Activated CD4-positive, alpha-beta T cell treated with anti-CD3 and anti-CD28 coated beads for 36 hours (primary cell): ENCODE measurements at regions of chr16 and their contacts with region 1.

Region 1: GRCh38 chr16:87540945-87541877 is 48.4 kb upstream of the ZCCHC14 start:
- DNase-seq: no peak
- ATAC-seq: no peak
- H3K4me3 Mint-ChIP-seq: no peak overlapping the region
- H3K27ac Mint-ChIP-seq: no peak overlapping the region
- H3K4me1 Mint-ChIP-seq: peaks cover 11% of the 10 kb centered on the region
- H3K27me3 Mint-ChIP-seq: peaks cover 23% of the 10 kb centered on the region

Region 2: GRCh38 chr16:87416826-87417527 is 124.2 kb before region 1 on chr16:
- CTCF ChIA-PET with region 1: no interaction called
- POLR2A ChIA-PET with region 1: no interaction called
- intact Hi-C with region 1: loop called (anchors 5 kb)
- DNase-seq: peak; percentile 67
- ATAC-seq: no peak
- H3K4me3 Mint-ChIP-seq: no peak overlapping the region
- H3K27ac Mint-ChIP-seq: no peak overlapping the region
- H3K4me1 Mint-ChIP-seq: no peaks in the 10 kb centered on the region
- H3K27me3 Mint-ChIP-seq: no peaks in the 10 kb centered on the region